ENCODE measurements at regions of chr5 and their contacts with region 1.

Region 1: GRCh38 chr5:113990581-113990980 is 371.3 kb upstream of the KCNN2 start:
- DNase-seq: no peak
- ATAC-seq: no peak

Region 2: GRCh38 chr5:113274836-113275414 is 715.7 kb before region 1 on chr5:
- intact Hi-C with region 1: no loop called
- DNase-seq: no peak
- ATAC-seq: no peak

Region 3: GRCh38 chr5:113495422-113495841 is 495.1 kb before region 1 on chr5:
- intact Hi-C with region 1: loop called (anchors 5 kb)
- DNase-seq: no peak
- ATAC-seq: no peak

Measured in sciatic nerve (tissue), 2 donors.